Esophagus muscularis mucosa (tissue), 4 donors: ENCODE measurements at regions of chr2 and their contacts with region 1.

Region 1: DNA sequence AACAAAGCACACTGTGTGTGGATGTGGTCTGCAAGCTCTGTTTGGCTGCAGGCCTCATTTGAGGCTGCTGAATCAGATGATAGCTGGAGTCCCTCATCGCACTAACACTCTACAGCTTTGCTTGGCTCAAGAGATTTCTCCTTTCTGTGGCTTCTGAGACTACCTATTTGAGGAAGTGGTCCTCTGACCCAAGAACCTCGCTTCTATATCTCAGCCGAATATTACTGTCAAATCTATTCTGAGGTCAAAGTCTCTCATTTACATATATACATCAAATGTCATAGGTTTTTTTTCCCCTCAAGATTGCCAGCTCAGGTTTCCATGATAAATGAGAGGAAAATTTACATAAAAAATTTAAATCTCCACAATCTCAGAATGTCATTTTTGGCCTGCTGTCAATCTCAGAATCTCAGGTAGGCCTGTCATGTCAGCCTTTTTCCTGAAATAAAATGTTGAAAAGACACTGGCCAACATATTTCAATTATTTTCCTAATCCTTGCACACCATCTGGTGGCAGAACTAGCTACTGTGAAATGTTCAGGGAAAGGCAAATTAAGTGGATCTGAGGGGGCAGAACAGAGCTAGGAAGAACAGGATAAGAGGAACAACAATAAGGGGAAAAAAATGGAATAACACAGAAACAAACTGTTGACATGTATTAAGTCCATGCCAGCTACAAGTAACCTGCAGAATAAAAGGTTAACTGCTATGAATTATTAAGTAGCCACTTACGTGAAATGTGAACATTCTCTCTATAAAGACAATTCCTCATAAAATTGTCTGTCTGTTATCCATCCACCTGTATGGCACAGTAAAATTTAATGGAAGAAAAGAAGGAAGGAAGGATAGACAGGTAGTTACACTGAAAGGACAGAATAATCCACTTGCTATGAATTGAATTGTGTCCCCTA is 39.3 kb downstream of the AP1S3 start:
- DNase-seq: no peak
- H3K4me3 ChIP-seq: no peak overlapping the region
- H3K27ac ChIP-seq: no peak overlapping the region
- H3K4me1 ChIP-seq: no peaks in the 10 kb centered on the region
- H3K27me3 ChIP-seq: no peaks in the 10 kb centered on the region
- CTCF ChIP-seq: peak; percentile 58 to 70 (median 60)
- EP300 ChIP-seq: no peak
- POLR2A ChIP-seq: no peak

Region 2: GRCh38 chr2:222690564-222691200 is 1107.4 kb before region 1 on chr2:
- intact Hi-C with region 1: loop called (anchors 5 kb)
- DNase-seq: no peak
- H3K4me3 ChIP-seq: no peak overlapping the region
- H3K27ac ChIP-seq: no peak overlapping the region
- H3K4me1 ChIP-seq: no peaks in the 10 kb centered on the region
- H3K27me3 ChIP-seq: no peaks in the 10 kb centered on the region
- CTCF ChIP-seq: peak; percentile 93 to 98 (median 94)
- EP300 ChIP-seq: no peak
- POLR2A ChIP-seq: no peak

Region 3: DNA sequence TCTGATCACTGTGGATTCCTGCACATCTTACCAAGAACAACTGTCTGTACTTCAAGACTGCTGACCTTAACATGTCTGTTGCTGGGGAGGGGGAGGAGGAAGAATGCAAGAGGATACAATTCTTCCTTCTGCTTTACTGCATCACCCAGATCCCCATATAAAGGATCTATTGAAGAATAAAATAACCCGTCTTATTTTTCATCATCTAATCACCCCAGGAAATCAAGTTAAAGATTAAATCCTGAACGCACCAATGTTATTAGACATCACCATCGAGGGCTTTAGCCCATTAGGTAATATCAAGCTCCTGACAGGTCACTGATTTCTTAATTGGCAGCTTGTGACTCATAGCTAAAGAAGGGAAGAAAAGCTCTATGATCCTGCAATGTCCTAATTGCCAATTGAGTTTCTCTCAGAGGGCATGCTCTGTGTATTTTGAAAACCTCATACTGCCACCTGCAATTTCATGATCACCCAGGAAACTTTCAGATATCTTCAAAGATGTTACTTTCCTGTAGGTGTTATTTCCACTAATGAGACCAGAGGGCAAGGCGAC is 821.5 kb before region 1 on chr2:
- intact Hi-C with region 1: loop called (anchors 5 kb)
- DNase-seq: no peak
- H3K4me3 ChIP-seq: no peak overlapping the region
- H3K27ac ChIP-seq: no peak overlapping the region
- H3K4me1 ChIP-seq: peaks cover 7 to 17% (median 9%) of the 10 kb centered on the region in 4 donors
- H3K27me3 ChIP-seq: no peaks in the 10 kb centered on the region
- CTCF ChIP-seq: no peak
- EP300 ChIP-seq: no peak
- POLR2A ChIP-seq: no peak

Region 4: GRCh38 chr2:223692191-223692947 is 105.7 kb before region 1 on chr2:
- intact Hi-C with region 1: loop called (anchors 10 kb)
- DNase-seq: no peak
- H3K4me3 ChIP-seq: no peak overlapping the region
- H3K27ac ChIP-seq: no peak overlapping the region
- H3K4me1 ChIP-seq: peaks cover 0 to 5% (median 0%) of the 10 kb centered on the region in 4 donors
- H3K27me3 ChIP-seq: no peaks in the 10 kb centered on the region
- CTCF ChIP-seq: peak; percentile 44 to 54 (median 49)
- EP300 ChIP-seq: no peak
- POLR2A ChIP-seq: no peak

Region 5: GRCh38 chr2:223837287-223838061 is 39.4 kb after region 1 on chr2 and contains the start of gene AP1S3:
- intact Hi-C with region 1: no loop called
- DNase-seq: no peak
- H3K4me3 ChIP-seq: peak within 1 kb of the TSS; percentile 64 to 87 (median 78)
- H3K27ac ChIP-seq: peak within 1 kb of the TSS; percentile 37 to 58 (median 50)
- H3K4me1 ChIP-seq: peaks cover 10 to 14% (median 11%) of the 10 kb centered on the region in 4 donors
- H3K27me3 ChIP-seq: no peaks in the 10 kb centered on the region
- CTCF ChIP-seq: no peak
- EP300 ChIP-seq: no peak
- POLR2A ChIP-seq: no peak
- total RNA-seq, gene AP1S3: 0.40 to 2.7 (median 0.85) TPM

Region 6: DNA sequence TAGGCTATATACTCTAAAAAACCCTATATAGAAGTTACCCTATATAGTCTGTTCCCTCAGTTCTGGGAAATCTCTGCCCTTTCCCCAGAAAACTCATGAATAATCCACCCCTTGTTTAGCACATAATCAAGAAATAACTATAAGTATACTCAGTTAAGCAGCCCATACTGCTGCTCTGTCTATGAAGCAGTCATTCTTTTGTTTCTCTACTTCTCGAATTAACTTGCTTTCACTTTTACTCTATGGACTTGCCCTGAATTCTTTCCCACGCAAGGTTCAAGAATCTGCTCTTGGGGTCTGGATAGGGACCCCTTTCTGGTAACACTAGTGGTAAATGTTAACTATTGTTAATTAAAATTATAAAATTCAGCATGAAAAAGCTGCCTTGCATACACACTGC is 56.7 kb after region 1 on chr2:
- intact Hi-C with region 1: no loop called
- DNase-seq: no peak
- H3K4me3 ChIP-seq: no peak overlapping the region
- H3K27ac ChIP-seq: no peak overlapping the region
- H3K4me1 ChIP-seq: no peaks in the 10 kb centered on the region
- H3K27me3 ChIP-seq: no peaks in the 10 kb centered on the region
- CTCF ChIP-seq: no peak
- EP300 ChIP-seq: no peak
- POLR2A ChIP-seq: no peak